Heart left ventricle (tissue), 16 donors: ENCODE measurements at regions of chr15 and their contacts with region 1.

Region 1: DNA sequence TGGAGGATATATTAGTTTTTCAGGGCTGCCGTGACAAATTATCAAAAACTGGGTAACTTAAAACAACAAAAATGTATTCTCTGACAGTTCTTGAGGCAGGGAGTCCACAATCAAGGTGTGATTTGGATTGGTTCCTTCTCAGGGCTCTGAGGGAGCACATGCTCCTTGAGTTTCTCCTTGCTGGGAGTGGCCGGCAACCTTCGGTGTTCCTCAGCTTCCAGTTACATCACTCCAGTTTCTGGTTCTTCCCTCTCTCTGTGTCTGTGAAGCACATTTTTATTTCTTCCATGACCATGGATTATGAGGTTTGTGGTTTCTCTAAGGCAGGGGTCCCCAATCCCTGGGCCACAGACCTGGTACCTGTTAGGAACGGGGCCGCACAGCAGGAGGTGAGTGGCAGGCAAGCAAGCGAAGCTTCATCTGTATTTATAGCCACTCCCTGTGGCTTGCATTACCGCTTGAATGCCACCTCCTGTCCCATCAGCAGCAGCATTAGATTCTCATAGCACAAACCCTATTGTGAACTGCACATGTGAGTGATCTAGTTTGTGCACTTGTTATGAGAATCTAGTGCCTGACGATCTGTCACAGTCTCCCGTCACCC is 24.3 kb downstream of the LRRC28 start:
- DNase-seq: no peak
- ATAC-seq: no peak
- H3K4me3 ChIP-seq: no peak overlapping the region
- H3K27ac ChIP-seq: no peak overlapping the region
- H3K4me1 ChIP-seq: peaks cover 0 to 14% (median 0%) of the 10 kb centered on the region in 12 donors
- H3K27me3 ChIP-seq: no peaks in the 10 kb centered on the region
- CTCF ChIP-seq: no peak
- POLR2A ChIP-seq: no peak

Region 2: GRCh38 chr15:99733268-99734039 is 457.8 kb after region 1 on chr15 and contains the start of gene LYSMD4:
- intact Hi-C with region 1: loop called in 4 of 10 experiments (anchors 5 to 10 kb)
- DNase-seq: peak; percentile 98 to 99 (median 99)
- ATAC-seq: peak; percentile 98 to 99 (median 99)
- H3K4me3 ChIP-seq: peak within 1 kb of the TSS; percentile 55 to 99 (median 96)
- H3K27ac ChIP-seq: peak within 1 kb of the TSS; percentile 49 to 94 (median 84)
- H3K4me1 ChIP-seq: peaks cover 0 to 42% (median 19%) of the 10 kb centered on the region in 12 donors
- H3K27me3 ChIP-seq: no peaks in the 10 kb centered on the region
- CTCF ChIP-seq: no peak
- POLR2A ChIP-seq: peak in 1 of 2 donors; percentile 91
- total RNA-seq, gene LYSMD4: 8.3 to 12.8 (median 10.3) TPM

Region 3: DNA sequence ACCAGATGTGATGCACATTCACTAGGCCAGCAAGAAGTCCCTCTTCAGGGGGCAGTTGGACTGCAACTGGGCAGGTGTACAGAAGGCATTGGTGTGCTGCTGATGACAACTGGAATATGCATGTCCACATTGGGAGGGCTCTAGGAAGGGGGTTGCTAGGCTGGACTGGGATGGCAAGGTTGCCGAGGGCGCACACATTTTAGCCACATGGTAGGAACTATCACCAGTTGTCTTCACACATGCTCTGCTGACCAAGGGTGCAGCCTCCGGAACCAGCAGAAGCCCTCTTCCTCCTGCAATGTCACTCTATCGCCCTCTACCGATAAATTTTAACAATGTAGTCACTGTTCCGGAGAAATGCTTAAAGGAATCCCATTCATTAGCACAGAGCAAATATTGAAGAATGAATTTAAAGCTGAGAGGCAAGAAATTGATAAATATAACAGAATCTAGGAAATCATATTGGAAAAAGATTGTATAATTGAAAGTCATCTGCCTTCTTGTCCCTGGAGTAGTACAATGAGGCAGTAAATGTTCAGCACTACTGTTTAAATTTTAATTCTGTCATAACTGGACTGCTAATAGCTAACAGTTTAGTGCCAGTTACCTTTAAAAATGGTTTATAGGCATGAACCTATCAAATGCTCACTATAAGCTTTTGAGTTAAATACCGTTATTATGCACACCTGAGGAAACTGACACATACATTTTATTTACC is 480.2 kb after region 1 on chr15:
- intact Hi-C with region 1: loop called in 9 of 10 experiments (anchors 1 to 5 kb)
- DNase-seq: peak; percentile 45 to 60 (median 55)
- ATAC-seq: peak; percentile 73 to 91 (median 88)
- H3K4me3 ChIP-seq: no peak overlapping the region
- H3K27ac ChIP-seq: no peak overlapping the region
- H3K4me1 ChIP-seq: peaks cover 0 to 4% (median 0%) of the 10 kb centered on the region in 12 donors
- H3K27me3 ChIP-seq: no peaks in the 10 kb centered on the region
- CTCF ChIP-seq: peak; percentile 78 to 92 (median 88)
- POLR2A ChIP-seq: no peak

Region 4: DNA sequence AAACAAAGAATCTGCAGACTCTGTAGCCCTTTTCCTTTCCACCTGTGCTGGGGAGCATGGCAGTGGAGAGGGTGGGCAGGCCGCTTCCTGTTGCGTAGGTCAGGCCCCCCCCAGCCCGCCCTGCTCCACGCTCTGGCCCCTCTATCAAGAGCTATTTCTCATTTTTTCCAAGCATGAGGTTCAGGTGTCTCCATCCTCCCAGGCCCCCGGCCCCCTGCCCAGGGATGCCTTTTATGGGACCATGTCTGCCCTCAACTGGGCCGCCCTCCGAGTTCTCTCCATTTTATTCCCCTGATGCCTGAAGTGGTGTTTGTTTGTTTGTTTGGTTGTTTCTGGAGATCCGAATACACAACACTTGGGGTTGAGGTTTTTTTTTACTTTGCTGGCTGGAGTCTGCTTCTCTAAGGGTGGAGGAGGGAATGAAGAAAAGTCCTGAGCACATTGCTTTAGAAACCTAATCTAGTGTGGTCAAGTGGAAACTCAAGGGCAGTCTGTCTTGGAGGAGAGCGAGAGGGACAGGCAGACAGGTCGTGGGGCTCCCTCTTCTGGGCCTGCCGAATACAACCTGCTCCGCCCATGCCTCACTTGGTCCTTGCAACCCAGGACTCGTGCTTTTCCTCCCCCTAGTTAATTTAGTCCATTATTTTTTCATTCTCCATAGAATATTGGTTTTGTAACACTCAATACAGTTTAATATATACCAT is 634.1 kb after region 1 on chr15:
- intact Hi-C with region 1: loop called in 3 of 10 experiments (anchors 2 to 10 kb)
- DNase-seq: peak in 1 of 5 donors; percentile 43
- ATAC-seq: peak in 3 of 4 donors; percentile 78 to 89 (median 86)
- H3K4me3 ChIP-seq: no peak overlapping the region
- H3K27ac ChIP-seq: no peak overlapping the region
- H3K4me1 ChIP-seq: no peaks in the 10 kb centered on the region
- H3K27me3 ChIP-seq: no peaks in the 10 kb centered on the region
- CTCF ChIP-seq: peak in 11 of 12 donors; percentile 8 to 53 (median 39)
- POLR2A ChIP-seq: no peak